ENCODE measurements at regions of chr2 and their contacts with region 1.

Region 1: GRCh38 chr2:218727502-218728165 is 17.0 kb downstream of the TTLL4 start:
- DNase-seq: no peak
- CTCF ChIP-seq: peak; percentile 49

Region 2: GRCh38 chr2:218252509-218253231 is 475.0 kb before region 1 on chr2:
- in situ Hi-C with region 1: no loop called
- DNase-seq: no peak
- CTCF ChIP-seq: no peak

Region 3: DNA sequence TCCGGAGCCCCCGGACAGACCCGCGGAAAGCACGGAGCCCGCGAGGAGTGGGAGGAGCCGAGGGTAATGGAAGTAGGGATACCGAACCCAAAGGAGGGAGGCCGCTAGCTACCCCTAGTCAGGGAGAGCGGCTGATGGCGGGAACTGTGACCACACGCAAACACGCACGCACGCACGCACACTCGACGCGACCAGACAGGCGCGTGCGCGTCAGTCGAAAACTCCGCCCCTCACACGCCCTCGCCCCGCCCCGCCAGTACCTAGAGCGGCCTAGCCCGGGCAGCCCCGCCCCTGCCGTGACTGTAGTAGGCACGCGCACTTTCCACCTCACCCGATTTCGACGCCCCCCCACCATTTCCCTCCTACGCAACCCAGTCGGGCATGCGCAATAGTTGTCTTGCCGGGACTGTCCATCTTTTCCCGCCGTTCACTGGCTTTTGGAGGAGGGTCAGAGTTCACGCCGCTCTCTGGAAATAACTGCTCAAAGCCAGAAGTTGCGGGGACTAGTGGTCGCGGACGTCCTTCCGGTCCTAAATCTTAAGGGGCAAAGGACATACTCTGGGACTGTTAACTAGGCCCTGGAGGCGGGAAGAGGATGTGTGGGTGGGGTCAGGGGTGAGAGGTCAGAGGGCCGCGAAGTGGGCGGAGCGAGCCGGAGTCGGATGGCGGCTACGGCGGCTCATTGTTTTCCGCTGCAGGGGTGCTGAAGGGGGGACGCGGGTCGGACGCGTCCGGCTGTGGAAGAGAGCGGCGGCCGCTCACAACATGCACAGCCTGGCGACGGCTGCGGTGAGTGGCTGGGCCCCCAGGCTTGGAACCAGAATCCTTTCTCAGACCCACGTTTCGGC is 159.2 kb before region 1 on chr2 and contains the starts of genes CNOT9 and USP37:
- in situ Hi-C with region 1: no loop called
- DNase-seq: peak; percentile 95
- CTCF ChIP-seq: no peak

Region 4: DNA sequence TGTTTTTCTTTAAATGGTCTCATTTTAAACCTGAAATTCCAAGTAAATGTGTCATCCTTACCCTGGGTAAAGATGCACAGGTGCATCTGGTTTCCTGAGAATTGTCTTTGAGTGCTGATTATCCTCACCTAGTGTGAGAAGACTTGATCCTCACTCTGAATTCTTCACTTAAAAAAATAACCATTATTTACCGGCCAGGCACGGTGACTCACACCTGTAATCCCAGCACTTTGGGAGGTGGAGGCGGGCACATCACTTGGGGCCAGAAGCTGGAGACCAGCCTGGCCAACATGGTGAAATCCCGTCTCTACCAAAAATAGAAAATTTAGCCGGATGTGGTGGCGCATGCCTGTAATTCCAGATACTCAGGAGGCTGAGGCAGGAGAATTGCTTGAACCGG is 122.1 kb after region 1 on chr2:
- in situ Hi-C with region 1: loop called (anchors 10 kb)
- DNase-seq: no peak
- CTCF ChIP-seq: no peak

Region 5: GRCh38 chr2:219182331-219183150 is 454.9 kb after region 1 on chr2:
- in situ Hi-C with region 1: no loop called
- DNase-seq: no peak
- CTCF ChIP-seq: no peak

Measured in GM13977 (cell line).